Ascending aorta (tissue), 2 donors: ENCODE measurements at regions of chr16 and their contacts with region 1.

Region 1: GRCh38 chr16:24036614-24037013 is 200.8 kb downstream of the PRKCB start:
- DNase-seq: no peak
- H3K4me3 ChIP-seq: no peak overlapping the region
- H3K27ac ChIP-seq: no peak overlapping the region
- H3K4me1 ChIP-seq: no peaks in the 10 kb centered on the region
- H3K27me3 ChIP-seq: no peaks in the 10 kb centered on the region
- CTCF ChIP-seq: peak; percentile 35 to 65 (median 43)

Region 2: DNA sequence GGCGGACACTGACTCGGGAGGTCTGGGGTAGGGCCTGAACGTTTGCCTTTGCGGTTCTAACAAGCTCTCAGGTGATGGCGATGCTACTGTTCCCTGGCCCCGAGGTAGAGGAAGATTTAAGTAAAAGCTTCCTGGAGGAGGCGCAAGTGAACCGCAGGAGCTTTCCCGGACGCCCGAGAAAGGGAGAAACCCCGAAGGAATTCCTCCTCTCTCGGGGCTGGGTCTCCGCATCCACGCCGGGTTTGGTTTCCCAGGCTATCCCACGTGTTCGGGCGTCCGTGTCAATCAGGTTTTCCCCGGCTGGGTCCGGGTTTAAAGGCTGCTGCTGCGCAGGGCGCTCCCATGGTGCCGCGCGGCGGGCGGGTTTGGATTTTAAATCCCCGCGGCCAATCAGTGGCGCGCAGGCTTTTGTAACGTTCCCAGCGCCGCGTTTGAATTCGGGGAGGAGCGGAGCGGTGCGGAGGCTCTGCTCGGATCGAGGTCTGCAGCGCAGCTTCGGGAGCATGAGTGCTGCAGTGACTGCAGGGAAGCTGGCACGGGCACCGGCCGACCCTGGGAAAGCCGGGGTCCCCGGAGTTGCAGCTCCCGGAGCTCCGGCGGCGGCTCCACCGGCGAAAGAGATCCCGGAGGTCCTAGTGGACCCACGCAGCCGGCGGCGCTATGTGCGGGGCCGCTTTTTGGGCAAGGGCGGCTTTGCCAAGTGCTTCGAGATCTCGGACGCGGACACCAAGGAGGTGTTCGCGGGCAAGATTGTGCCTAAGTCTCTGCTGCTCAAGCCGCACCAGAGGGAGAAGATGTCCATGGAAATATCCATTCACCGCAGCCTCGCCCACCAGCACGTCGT is 358.0 kb before region 1 on chr16 and contains the start of gene PLK1:
- intact Hi-C with region 1: loop called (anchors 10 kb)
- DNase-seq: peak in 1 of 2 donors; percentile 79
- H3K4me3 ChIP-seq: peak within 1 kb of the TSS; percentile 57 to 66
- H3K27ac ChIP-seq: no peak within 1 kb of the TSS
- H3K4me1 ChIP-seq: peaks cover 4 to 10% of the 10 kb centered on the region in 2 donors
- H3K27me3 ChIP-seq: no peaks in the 10 kb centered on the region
- CTCF ChIP-seq: peak in 2 of 3 experiments; percentile 14 to 50
- total RNA-seq, gene PLK1: 35.2 TPM

Region 3: GRCh38 chr16:23987443-23987842 is 49.2 kb before region 1 on chr16:
- intact Hi-C with region 1: no loop called
- DNase-seq: no peak
- H3K4me3 ChIP-seq: no peak overlapping the region
- H3K27ac ChIP-seq: no peak overlapping the region
- H3K4me1 ChIP-seq: no peaks in the 10 kb centered on the region
- H3K27me3 ChIP-seq: no peaks in the 10 kb centered on the region
- CTCF ChIP-seq: no peak